ENCODE measurements at regions of chr5 and their contacts with region 1.

Region 1: DNA sequence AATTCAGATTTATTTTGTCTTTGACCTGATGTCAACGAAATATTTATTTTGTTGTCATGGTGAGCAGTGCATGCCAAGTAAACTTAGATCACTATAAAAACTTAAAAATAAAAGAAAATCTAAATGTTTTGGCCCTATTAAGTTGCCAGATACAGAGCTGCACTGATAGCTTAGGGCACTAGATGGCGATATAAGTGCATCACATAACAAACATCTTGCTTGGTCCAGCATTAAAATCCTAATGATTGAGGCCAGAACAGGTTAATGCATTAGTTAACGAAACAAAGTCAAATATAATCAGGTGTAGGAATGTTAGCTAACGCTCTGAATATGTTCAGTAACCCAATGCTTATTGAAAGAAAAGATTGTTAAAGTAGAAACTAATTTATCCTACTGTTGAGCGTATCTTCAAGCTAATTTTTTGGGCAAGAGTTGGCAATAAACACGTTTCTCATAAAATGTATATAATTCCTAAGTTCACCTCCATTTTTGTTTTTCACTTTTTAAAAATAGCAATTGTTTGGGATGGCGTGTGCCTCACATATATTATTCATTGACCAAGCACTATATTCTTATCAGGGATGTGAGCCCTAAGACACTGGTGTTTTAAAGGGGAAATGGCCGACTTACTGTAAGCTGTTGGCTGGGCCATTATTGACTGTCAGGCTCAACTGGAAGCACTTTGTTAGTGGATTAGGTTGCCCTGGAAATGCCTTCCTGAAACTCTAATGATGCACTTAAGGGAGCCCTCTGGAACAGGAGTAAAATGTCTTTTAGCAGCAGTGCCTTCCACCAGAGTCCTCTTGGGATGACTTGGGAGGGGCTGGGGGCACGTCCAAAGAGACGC is 33.3 kb downstream of the KCTD16 start:
- DNase-seq: peak in 1 of 2 experiments; percentile 55
- H3K4me3 ChIP-seq: no peak overlapping the region
- H3K4me3 Mint-ChIP-seq: peak overlapping the region; percentile 66
- H3K27ac Mint-ChIP-seq: no peak overlapping the region
- H3K4me1 ChIP-seq: peaks cover 5% of the 10 kb centered on the region; the same call in 1 of the 2 replicates
- H3K4me1 Mint-ChIP-seq: peaks cover 7% of the 10 kb centered on the region
- H3K27me3 ChIP-seq: no peaks in the 10 kb centered on the region; the same call in 1 of the 2 replicates
- H3K27me3 Mint-ChIP-seq: peaks cover 27% of the 10 kb centered on the region
- CTCF ChIP-seq: peak; percentile 82

Region 2: GRCh38 chr5:144390133-144390532 is 186.2 kb after region 1 on chr5:
- CTCF ChIA-PET with region 1: interaction called, 11 read pairs
- POLR2A ChIA-PET with region 1: no interaction called
- intact Hi-C with region 1: loop called (anchors 1 kb)
- DNase-seq: peak; percentile 37 to 39
- H3K4me3 ChIP-seq: no peak overlapping the region
- H3K4me3 Mint-ChIP-seq: no peak overlapping the region
- H3K27ac Mint-ChIP-seq: no peak overlapping the region
- H3K4me1 ChIP-seq: no peaks in the 10 kb centered on the region
- H3K4me1 Mint-ChIP-seq: no peaks in the 10 kb centered on the region
- H3K27me3 ChIP-seq: no peaks in the 10 kb centered on the region
- H3K27me3 Mint-ChIP-seq: no peaks in the 10 kb centered on the region
- CTCF ChIP-seq: peak; percentile 57 to 61

Region 3: DNA sequence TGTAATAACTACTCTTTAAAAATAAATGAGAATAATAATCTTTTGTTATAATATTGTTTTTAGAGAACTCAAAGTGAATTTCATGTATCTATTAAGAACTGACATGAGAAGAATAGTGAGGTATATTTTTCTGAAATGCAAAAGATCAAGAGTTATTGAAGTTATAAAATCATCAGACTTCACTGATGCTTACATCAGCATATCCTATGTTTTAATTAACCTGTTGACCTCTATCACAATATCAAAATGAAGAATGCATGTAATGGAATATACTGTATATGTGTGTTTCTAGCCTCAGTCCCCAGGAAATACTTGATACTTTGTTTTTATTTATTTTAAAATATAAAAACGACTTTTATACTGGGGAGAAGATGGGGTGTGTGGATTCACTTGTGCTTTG is 499.8 kb after region 1 on chr5:
- CTCF ChIA-PET with region 1: no interaction called
- POLR2A ChIA-PET with region 1: no interaction called
- intact Hi-C with region 1: loop called (anchors 5 kb)
- DNase-seq: no peak
- H3K4me3 ChIP-seq: no peak overlapping the region
- H3K4me3 Mint-ChIP-seq: no peak overlapping the region
- H3K27ac Mint-ChIP-seq: no peak overlapping the region
- H3K4me1 ChIP-seq: no peaks in the 10 kb centered on the region
- H3K4me1 Mint-ChIP-seq: no peaks in the 10 kb centered on the region
- H3K27me3 ChIP-seq: no peaks in the 10 kb centered on the region
- H3K27me3 Mint-ChIP-seq: peaks cover 4% of the 10 kb centered on the region
- CTCF ChIP-seq: no peak

Region 4: DNA sequence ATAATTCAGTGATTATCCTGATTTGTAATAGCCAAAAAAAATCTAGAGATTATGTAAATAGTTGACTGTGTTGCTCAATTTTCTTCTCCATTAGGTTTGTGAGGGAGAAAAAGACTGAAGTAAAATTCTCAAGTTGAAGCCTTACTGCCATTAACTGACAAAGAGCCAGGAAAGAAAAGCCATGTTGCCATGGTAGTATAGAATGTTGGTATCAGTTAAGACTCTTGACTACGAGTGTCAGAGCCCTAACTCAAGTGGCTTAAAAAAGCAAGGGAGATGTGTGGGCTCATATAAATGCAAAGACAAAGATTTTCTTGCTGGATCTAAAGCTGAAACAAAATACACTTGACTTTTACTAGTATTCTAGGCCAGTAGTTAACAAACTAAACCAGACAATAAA is 538.4 kb after region 1 on chr5:
- CTCF ChIA-PET with region 1: no interaction called
- POLR2A ChIA-PET with region 1: no interaction called
- intact Hi-C with region 1: no loop called
- DNase-seq: no peak
- H3K4me3 ChIP-seq: no peak overlapping the region
- H3K4me3 Mint-ChIP-seq: no peak overlapping the region
- H3K27ac Mint-ChIP-seq: no peak overlapping the region
- H3K4me1 ChIP-seq: no peaks in the 10 kb centered on the region
- H3K4me1 Mint-ChIP-seq: no peaks in the 10 kb centered on the region
- H3K27me3 ChIP-seq: no peaks in the 10 kb centered on the region
- H3K27me3 Mint-ChIP-seq: no peaks in the 10 kb centered on the region
- CTCF ChIP-seq: no peak

Region 5: DNA sequence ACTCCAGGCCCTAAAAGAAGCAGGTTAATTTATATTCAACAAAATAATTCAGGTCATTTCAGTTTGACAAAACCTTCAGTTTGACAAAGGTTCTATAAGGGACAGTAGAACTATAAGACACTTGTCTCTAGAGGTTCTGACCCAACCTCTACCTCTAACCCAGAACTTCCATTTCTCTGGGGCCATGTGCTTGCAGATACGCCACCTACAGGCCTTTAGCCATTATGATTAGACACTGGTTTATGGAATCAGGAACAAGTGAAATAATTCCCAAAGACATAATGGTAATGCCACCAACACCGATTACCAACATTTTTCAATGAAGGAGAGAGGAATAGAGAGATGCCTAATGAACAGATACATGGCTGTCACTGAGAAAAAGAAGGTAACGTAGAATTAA is 897.3 kb after region 1 on chr5:
- CTCF ChIA-PET with region 1: no interaction called
- POLR2A ChIA-PET with region 1: no interaction called
- intact Hi-C with region 1: loop called (anchors 1 kb)
- DNase-seq: peak in 1 of 2 experiments; percentile 3
- H3K4me3 ChIP-seq: no peak overlapping the region
- H3K4me3 Mint-ChIP-seq: no peak overlapping the region
- H3K27ac Mint-ChIP-seq: no peak overlapping the region
- H3K4me1 ChIP-seq: no peaks in the 10 kb centered on the region
- H3K4me1 Mint-ChIP-seq: no peaks in the 10 kb centered on the region
- H3K27me3 ChIP-seq: no peaks in the 10 kb centered on the region
- H3K27me3 Mint-ChIP-seq: peaks cover 10% of the 10 kb centered on the region
- CTCF ChIP-seq: peak; percentile 37 to 59

Region 6: GRCh38 chr5:145347026-145347616 is 1143.1 kb after region 1 on chr5:
- CTCF ChIA-PET with region 1: interaction called, 3 read pairs
- POLR2A ChIA-PET with region 1: no interaction called
- intact Hi-C with region 1: loop called (anchors 1 kb)
- DNase-seq: peak in 1 of 2 experiments; percentile 41
- H3K4me3 ChIP-seq: no peak overlapping the region
- H3K4me3 Mint-ChIP-seq: no peak overlapping the region
- H3K27ac Mint-ChIP-seq: no peak overlapping the region
- H3K4me1 ChIP-seq: no peaks in the 10 kb centered on the region
- H3K4me1 Mint-ChIP-seq: no peaks in the 10 kb centered on the region
- H3K27me3 ChIP-seq: no peaks in the 10 kb centered on the region
- H3K27me3 Mint-ChIP-seq: no peaks in the 10 kb centered on the region
- CTCF ChIP-seq: peak; percentile 63 to 64

Region 7: GRCh38 chr5:146109379-146109778 is 1905.4 kb after region 1 on chr5:
- CTCF ChIA-PET with region 1: no interaction called
- POLR2A ChIA-PET with region 1: interaction called, 10 read pairs
- intact Hi-C with region 1: no loop called
- DNase-seq: no peak
- H3K4me3 ChIP-seq: no peak overlapping the region
- H3K4me3 Mint-ChIP-seq: no peak overlapping the region
- H3K27ac Mint-ChIP-seq: no peak overlapping the region
- H3K4me1 ChIP-seq: no peaks in the 10 kb centered on the region
- H3K4me1 Mint-ChIP-seq: no peaks in the 10 kb centered on the region
- H3K27me3 ChIP-seq: no peaks in the 10 kb centered on the region
- H3K27me3 Mint-ChIP-seq: no peaks in the 10 kb centered on the region
- CTCF ChIP-seq: no peak

Measured in Caco-2 (cell line).